AG04450 (cell line): ENCODE measurements at regions of chr4 and their contacts with region 1.

Region 1: GRCh38 chr4:71009890-71010588 is 16.6 kb downstream of the DCK start:
- DNase-seq: no peak
- H3K4me3 ChIP-seq: no peak overlapping the region
- H3K27ac ChIP-seq: no peak overlapping the region
- H3K27me3 ChIP-seq: no peaks in the 10 kb centered on the region
- CTCF ChIP-seq: peak; percentile 68

Region 2: DNA sequence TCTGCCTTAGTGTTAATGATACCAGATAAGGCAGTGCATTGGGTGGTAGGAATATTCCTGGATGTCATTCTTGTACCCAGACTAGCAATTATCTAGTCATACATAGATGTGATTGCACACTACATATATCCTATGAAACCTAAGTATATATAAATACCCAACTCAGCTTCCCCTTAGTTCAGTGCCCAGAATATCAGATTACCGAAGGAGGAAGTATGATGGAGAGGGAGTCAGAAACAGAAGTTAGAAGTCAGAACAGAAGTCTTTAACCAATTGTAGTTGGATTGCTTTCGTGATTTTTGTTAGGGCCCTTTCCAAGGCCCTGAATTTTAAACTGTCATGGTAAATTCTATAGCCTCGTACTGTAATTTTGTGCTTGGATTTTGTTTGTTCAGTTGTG is 65.0 kb before region 1 on chr4:
- CTCF ChIA-PET with region 1: interaction called, 11 read pairs
- POLR2A ChIA-PET with region 1: no interaction called
- DNase-seq: no peak
- H3K4me3 ChIP-seq: no peak overlapping the region
- H3K27ac ChIP-seq: peak overlapping the region; percentile 25
- H3K27me3 ChIP-seq: no peaks in the 10 kb centered on the region
- CTCF ChIP-seq: no peak

Region 3: DNA sequence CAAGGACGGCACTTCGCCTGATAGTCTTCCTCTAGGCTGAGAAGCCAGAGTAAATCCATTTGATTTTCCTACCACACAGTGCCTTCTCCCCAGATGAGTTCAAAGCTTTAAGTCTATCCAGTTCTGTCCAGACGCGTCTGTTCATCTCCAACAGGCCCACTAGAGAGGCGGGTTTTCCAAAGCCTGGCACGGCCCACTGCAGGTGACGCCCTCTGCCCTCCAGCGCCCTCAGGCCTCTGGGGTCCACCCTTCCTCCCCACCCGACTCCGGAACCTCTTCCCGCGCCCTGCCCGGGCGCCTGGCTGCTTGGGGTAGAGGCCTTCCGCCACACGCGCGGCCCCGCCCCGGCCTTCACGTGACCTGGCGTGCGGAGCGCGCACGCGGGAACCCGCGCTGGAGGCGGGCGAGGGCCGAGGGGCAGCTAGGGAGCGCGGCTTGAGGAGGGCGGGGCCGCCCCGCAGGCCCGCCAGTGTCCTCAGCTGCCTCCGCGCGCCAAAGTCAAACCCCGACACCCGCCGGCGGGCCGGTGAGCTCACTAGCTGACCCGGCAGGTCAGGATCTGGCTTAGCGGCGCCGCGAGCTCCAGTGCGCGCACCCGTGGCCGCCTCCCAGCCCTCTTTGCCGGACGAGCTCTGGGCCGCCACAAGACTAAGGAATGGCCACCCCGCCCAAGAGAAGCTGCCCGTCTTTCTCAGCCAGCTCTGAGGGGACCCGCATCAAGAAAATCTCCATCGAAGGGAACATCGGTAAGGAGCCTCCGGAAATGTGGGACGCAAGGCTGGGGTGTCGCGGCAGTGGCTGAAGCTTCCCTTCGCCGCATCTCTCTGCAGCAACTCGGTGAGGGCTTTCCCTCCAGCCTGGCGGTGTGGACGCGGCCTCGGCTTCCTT is 16.6 kb before region 1 on chr4 and contains the start of gene DCK:
- CTCF ChIA-PET with region 1: interaction called, 36 read pairs
- POLR2A ChIA-PET with region 1: interaction called, 4 read pairs
- DNase-seq: peak; percentile 73
- H3K4me3 ChIP-seq: peak within 1 kb of the TSS; percentile 89
- H3K27ac ChIP-seq: peak within 1 kb of the TSS; percentile 86
- H3K27me3 ChIP-seq: no peaks in the 10 kb centered on the region
- CTCF ChIP-seq: no peak
- polyA plus RNA-seq, gene DCK: 7.0 and 9.8 TPM in 2 replicates

Region 4: GRCh38 chr4:71020611-71021010 is 10.6 kb after region 1 on chr4:
- CTCF ChIA-PET with region 1: interaction called, 54 read pairs
- POLR2A ChIA-PET with region 1: no interaction called
- DNase-seq: no peak
- H3K4me3 ChIP-seq: no peak overlapping the region
- H3K27ac ChIP-seq: no peak overlapping the region
- H3K27me3 ChIP-seq: no peaks in the 10 kb centered on the region
- CTCF ChIP-seq: no peak

Region 5: DNA sequence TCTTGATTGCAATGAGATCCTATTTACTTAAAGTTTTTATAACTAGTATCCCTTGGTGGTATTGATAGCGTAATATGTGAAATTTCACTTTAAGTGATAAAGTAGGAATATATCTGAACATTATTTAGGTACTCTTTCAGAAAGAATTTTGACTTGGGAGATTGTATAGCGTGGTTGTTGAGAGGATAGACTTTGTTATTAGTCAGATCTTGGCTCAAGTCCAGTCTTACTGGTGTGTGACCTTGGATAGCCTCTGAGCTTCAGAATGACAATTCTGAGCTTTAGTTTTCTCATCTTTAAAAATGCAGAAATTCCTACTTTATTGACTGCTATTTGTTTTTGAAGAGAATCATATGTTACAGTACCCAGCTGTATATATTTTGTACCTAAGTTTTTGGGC is 16.0 kb after region 1 on chr4:
- CTCF ChIA-PET with region 1: interaction called, 54 read pairs
- POLR2A ChIA-PET with region 1: no interaction called
- DNase-seq: peak; percentile 53
- H3K4me3 ChIP-seq: no peak overlapping the region
- H3K27ac ChIP-seq: no peak overlapping the region
- H3K27me3 ChIP-seq: no peaks in the 10 kb centered on the region
- CTCF ChIP-seq: no peak